SK-N-SH (cell line): ENCODE measurements at regions of chr19 and their contacts with region 1.

Region 1: GRCh38 chr19:34475026-34475974 is 6.3 kb upstream of the WTIP start:
- DNase-seq: no peak
- H3K4me3 ChIP-seq: 0 out of 4 replicates have a peak overlapping the region, but pooled peaks of 1 of the 2 experiments have one; percentile 14
- H3K27ac ChIP-seq: peak overlapping the region in 1 of 2 experiments; percentile 78; a peak in 3 of 4 replicates
- H3K4me1 ChIP-seq: 0 out of 4 replicates have a peak, but pooled peaks cover 0 to 8% of the 10 kb centered on the region in 2 experiments
- H3K27me3 ChIP-seq: no peaks in the 10 kb centered on the region
- CTCF ChIP-seq: no peak
- EP300 ChIP-seq: no peak
- RAD21 ChIP-seq: no peak

Region 2: DNA sequence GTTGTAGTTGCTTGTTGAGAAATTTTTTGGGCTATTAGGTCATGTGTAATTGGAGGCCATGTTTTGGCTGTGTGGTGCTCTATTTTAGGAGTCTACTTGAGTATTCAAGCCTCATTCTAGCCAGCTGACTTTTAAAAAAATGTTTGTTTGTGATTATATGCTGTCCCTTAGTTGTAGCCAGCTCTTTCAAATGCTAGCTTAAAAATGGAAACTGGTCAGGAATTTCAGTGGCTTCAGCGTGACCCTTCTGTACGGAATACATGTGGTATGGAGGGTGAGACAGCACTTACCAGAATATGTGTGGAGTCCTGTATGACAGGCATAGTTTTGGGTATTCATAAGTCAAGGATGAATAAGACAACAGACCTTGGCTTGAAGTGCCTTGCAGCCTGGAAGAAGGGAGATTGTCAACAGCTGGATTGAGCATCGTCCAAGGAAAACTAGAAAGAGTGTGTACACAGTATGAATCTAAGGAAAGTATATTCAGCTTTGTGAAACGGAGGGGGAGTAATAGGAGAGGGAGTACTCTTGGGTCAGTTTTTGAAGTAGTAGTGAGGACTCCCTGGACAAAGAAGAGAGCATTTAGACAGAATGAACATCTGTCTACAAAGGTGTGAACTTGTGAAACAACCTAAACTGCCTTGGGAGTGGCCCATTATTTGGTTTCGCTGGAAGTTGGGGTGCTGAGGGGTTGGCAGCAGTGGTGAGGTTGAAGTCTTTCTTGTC is 13.8 kb before region 1 on chr19:
- CTCF ChIA-PET with region 1: interaction called, 10 read pairs
- POLR2A ChIA-PET with region 1: interaction called, 5 read pairs
- DNase-seq: no peak
- H3K4me3 ChIP-seq: no peak overlapping the region
- H3K27ac ChIP-seq: no peak overlapping the region
- H3K4me1 ChIP-seq: peaks cover 0 to 2% of the 10 kb centered on the region in 2 experiments; a peak in 1 of 4 replicates
- H3K27me3 ChIP-seq: no peaks in the 10 kb centered on the region
- CTCF ChIP-seq: no peak
- EP300 ChIP-seq: no peak
- RAD21 ChIP-seq: no peak

Region 3: DNA sequence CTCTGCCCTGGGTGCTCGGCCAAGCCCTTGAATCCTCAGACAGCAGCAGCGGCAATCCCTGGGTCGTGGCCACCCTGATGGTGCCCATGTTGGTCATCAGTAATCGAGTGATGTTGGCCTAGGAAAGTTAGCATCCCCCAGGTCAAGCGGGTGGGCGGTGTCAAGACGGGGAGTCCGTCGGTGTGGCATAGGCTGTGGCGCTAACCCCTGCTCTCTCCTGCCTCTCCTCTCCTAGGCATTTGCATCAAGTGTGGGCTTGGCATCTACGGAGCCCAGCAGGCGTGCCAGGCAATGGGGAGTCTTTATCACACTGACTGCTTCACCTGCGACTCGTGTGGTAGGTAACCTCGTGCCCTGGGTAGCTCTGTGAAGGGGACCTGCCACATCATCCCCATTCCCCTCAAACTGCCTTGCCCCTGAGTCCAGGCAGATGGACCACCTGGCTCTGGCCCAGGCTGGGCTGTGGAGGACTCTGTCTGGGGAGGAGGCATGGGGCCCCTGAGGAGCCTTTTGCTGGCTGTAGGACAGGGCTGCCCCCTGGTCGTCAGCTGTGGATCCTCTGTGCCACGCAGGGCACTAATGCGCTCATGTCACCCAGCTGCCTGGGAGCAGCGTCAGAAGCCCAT is 15.0 kb after region 1 on chr19:
- CTCF ChIA-PET with region 1: no interaction called
- POLR2A ChIA-PET with region 1: no interaction called
- DNase-seq: no peak
- H3K4me3 ChIP-seq: no peak overlapping the region
- H3K27ac ChIP-seq: no peak overlapping the region
- H3K4me1 ChIP-seq: no peaks in the 10 kb centered on the region
- H3K27me3 ChIP-seq: no peaks in the 10 kb centered on the region
- CTCF ChIP-seq: no peak
- EP300 ChIP-seq: no peak
- RAD21 ChIP-seq: no peak

Region 4: DNA sequence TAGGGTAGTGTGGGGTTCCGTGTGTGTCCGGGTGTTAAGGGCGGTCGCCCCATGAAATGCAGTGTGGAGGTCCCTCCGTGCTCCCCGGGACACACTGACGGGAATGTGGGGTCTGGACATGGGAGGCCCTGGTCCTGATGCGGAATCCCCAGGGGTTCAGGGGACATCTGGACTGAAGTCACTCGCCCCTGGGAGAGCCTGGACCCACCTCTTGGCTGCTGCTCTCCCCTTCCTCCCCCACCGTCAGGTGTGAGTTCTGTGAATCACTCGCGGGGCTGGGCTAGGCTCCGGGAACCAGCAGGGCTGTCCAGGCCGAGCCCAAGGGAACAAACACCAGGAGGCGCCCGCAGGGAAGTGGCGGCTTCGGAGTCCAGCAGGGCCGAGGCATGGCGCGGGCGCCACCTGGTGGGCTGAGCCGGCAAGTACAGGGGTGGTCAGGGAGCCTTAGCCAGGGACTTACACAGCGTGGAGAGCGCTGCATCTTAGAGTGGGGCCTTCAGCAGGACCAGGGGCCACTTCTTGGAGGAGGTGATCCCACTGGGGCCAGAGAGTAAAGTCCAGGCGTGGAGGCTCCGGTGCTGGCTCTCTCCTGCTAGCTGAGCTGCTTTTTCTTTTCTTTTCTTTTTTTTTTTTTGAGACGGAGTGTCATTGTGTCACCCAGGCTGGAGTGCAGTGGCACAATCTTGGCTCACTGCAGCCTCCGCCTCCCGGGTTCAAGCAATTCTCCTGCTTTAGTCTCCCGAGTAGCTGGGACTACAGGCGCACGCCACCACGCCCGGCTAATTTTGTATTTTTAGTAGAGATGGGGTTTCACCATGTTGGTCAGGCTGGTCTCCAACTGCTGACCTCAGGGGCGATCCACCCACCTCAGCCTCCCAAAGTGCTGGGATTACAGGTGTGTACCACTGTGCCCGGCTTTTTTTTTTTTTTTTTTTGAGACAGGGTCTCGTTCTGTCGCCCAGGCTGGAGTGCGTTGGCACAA is 26.3 kb after region 1 on chr19:
- CTCF ChIA-PET with region 1: interaction called, 10 read pairs
- POLR2A ChIA-PET with region 1: no interaction called
- DNase-seq: peak; percentile 98
- H3K4me3 ChIP-seq: peak overlapping the region in 1 of 2 experiments; percentile 52; a peak in 1 of 4 replicates
- H3K27ac ChIP-seq: peak overlapping the region in 1 of 2 experiments; percentile 22; a peak in 1 of 4 replicates
- H3K4me1 ChIP-seq: no peaks in the 10 kb centered on the region; a peak in 1 of 4 replicates
- H3K27me3 ChIP-seq: no peaks in the 10 kb centered on the region
- CTCF ChIP-seq: peak; percentile 98
- EP300 ChIP-seq: no peak
- RAD21 ChIP-seq: peak; percentile 88

Region 5: GRCh38 chr19:34512254-34512822 is 37.0 kb after region 1 on chr19:
- CTCF ChIA-PET with region 1: no interaction called
- POLR2A ChIA-PET with region 1: no interaction called
- DNase-seq: peak; percentile 7
- H3K4me3 ChIP-seq: no peak overlapping the region
- H3K27ac ChIP-seq: no peak overlapping the region
- H3K4me1 ChIP-seq: no peaks in the 10 kb centered on the region
- H3K27me3 ChIP-seq: peaks cover 25% of the 10 kb centered on the region
- CTCF ChIP-seq: no peak
- EP300 ChIP-seq: no peak
- RAD21 ChIP-seq: no peak